ENCODE measurements at regions of chr7 and their contacts with region 1.

Region 1: GRCh38 chr7:114085592-114086501 is 167.0 kb upstream of the PPP1R3A start:
- DNase-seq: peak; percentile 16
- H3K4me3 ChIP-seq: peak overlapping the region; percentile 1 to 38 (median 38)
- H3K27ac ChIP-seq: no peak overlapping the region
- H3K4me1 ChIP-seq: peaks cover 13% of the 10 kb centered on the region
- H3K27me3 ChIP-seq: peaks cover 60% of the 10 kb centered on the region
- CTCF ChIP-seq: no peak

Region 2: DNA sequence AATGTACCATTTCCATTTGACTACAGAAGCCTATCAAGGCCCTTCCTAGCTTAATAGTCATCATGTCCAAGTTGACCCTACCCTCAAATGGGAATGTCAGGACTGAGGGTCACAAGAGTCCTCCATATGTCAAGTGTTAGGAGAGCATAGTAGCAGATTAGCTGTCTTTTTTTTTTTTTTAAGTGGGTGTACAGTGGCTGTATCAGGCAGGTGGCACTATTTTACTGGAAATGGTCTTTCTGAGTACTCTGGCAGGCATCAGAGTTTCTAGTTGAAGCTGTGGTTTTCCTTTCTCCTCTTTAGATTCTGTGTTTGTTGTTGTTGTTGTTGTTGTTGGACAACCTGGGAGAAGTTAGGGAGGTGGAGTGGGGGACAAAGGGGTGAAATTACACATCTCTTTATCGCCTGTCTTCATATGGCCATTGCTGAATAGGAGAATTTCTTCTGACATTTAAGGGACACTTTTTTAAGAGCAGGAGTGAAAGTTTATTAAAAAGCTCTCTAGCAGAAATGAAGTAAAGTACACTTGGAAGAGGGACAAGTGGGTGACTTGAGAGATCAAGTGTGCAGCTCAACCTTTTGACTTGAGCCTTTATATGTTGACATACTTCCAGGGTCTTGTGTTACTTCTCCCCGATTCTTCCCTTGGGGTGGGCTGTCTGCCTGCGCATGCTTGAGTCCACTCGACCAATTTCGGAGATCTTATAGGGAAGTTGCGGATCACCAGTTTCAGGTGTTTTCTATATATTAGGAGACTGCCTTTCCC is 224.7 kb after region 1 on chr7:
- CTCF ChIA-PET with region 1: interaction called, 5 read pairs
- dilution Hi-C with region 1: no loop called
- in situ Hi-C with region 1: no loop called
- intact Hi-C with region 1: loop called (anchors 10 kb)
- DNase-seq: no peak
- H3K4me3 ChIP-seq: no peak overlapping the region
- H3K27ac ChIP-seq: no peak overlapping the region
- H3K4me1 ChIP-seq: no peaks in the 10 kb centered on the region
- H3K27me3 ChIP-seq: no peaks in the 10 kb centered on the region
- CTCF ChIP-seq: peak in 1 of 2 donors; percentile 26

Region 3: DNA sequence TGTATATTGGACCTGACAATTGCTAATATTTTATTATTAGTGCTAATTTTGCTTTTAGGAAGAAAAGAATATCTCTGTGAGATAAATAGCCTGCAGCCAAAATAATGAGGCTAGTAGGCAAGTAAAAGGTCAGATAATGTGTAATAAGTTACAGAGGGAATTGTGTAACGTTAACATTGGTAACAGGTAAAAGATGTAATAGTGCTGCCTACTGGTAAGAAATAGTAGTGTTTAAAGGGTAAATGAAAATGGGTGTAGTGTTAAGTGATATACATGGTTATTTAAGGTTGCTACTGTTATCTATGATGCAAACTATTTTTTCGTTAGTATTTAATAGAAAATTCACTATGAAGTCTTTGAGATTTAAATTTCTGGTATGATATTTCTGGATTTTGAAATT is 319.6 kb after region 1 on chr7:
- CTCF ChIA-PET with region 1: no interaction called
- dilution Hi-C with region 1: no loop called
- in situ Hi-C with region 1: loop called in 1 of 2 experiments (anchors 25 kb)
- intact Hi-C with region 1: loop called (anchors 1 kb)
- DNase-seq: peak; percentile 32
- H3K4me3 ChIP-seq: no peak overlapping the region
- H3K27ac ChIP-seq: no peak overlapping the region
- H3K4me1 ChIP-seq: no peaks in the 10 kb centered on the region
- H3K27me3 ChIP-seq: no peaks in the 10 kb centered on the region
- CTCF ChIP-seq: peak; percentile 66 to 71

Region 4: DNA sequence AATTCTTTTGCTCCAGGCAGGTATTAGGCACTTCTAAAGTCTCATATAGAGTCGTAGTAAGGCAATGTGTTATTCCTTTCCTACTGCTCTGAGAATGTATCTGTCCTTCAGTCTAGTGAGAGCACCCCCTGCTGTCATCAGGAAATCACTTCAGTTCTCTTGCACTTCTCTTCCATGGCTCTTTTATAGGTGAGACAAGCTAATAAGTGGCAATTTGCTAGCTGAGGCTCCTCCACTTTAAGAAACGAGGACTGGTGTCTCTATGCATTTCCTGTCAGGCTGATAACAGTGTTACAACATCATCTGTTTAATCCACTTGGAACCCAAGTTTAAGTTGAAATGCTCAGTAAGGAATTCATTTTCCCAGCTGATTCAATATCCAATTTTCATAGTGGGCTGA is 1594.1 kb after region 1 on chr7:
- CTCF ChIA-PET with region 1: no interaction called
- dilution Hi-C with region 1: no loop called
- in situ Hi-C with region 1: no loop called
- intact Hi-C with region 1: loop called (anchors 10 kb)
- DNase-seq: peak; percentile 29
- H3K4me3 ChIP-seq: no peak overlapping the region
- H3K27ac ChIP-seq: no peak overlapping the region
- H3K4me1 ChIP-seq: no peaks in the 10 kb centered on the region
- H3K27me3 ChIP-seq: no peaks in the 10 kb centered on the region
- CTCF ChIP-seq: peak; percentile 65 to 68

Region 5: DNA sequence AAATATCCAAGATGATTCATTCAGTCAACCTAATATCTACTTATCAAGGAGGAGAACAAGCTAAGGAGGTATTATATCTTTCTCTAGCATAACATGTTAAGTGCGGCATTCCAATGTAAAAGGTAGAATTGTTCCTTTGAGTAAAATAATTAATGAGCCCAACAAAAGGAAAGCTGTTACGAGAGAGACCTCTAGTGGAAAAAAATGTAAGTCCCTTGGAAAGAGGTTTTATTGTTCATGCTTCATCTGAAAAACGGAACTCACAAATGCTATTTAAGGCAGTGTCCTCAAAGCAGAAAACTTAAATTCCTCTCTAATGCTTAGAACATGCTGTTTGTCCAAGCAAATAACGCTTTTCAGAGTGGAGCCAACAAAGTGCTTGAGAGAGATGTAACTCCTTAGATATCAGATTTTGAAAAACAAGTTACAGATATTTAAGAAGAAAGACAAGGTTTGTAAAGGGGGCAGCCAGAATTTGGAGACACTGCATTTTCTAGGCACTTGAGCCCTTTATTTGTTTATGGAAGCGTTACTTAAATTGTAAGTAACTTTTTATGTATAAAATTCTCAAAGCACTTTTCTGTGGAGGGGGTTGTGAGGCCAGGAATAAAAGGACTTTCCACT is 1824.8 kb after region 1 on chr7:
- CTCF ChIA-PET with region 1: no interaction called
- dilution Hi-C with region 1: no loop called
- in situ Hi-C with region 1: no loop called
- intact Hi-C with region 1: loop called (anchors 10 kb)
- DNase-seq: peak; percentile 11
- H3K4me3 ChIP-seq: no peak overlapping the region
- H3K27ac ChIP-seq: no peak overlapping the region
- H3K4me1 ChIP-seq: no peaks in the 10 kb centered on the region
- H3K27me3 ChIP-seq: peaks cover 8% of the 10 kb centered on the region
- CTCF ChIP-seq: peak; percentile 34 to 64